Esophagus muscularis mucosa (tissue), 4 donors: ENCODE measurements at regions of chr10 and their contacts with region 1.

Region 1: GRCh38 chr10:102729029-102730026 is 14.4 kb upstream of the WBP1L start:
- DNase-seq: no peak
- H3K4me3 ChIP-seq: no peak overlapping the region
- H3K27ac ChIP-seq: no peak overlapping the region
- H3K4me1 ChIP-seq: peaks cover 9 to 13% (median 12%) of the 10 kb centered on the region in 4 donors
- H3K27me3 ChIP-seq: no peaks in the 10 kb centered on the region
- CTCF ChIP-seq: peak in 2 of 3 experiments; percentile 92 to 96
- EP300 ChIP-seq: no peak
- POLR2A ChIP-seq: no peak

Region 2: GRCh38 chr10:102225646-102226541 is 503.4 kb before region 1 on chr10 and contains the start of gene ELOVL3:
- intact Hi-C with region 1: no loop called
- DNase-seq: peak; percentile 96
- H3K4me3 ChIP-seq: peak within 1 kb of the TSS; percentile 34 to 54 (median 41)
- H3K27ac ChIP-seq: peak within 1 kb of the TSS; percentile 53 to 76 (median 70)
- H3K4me1 ChIP-seq: peaks cover 24 to 32% (median 30%) of the 10 kb centered on the region in 4 donors
- H3K27me3 ChIP-seq: peaks cover 4 to 35% (median 8%) of the 10 kb centered on the region in 4 donors
- CTCF ChIP-seq: peak in 1 of 3 experiments; percentile 8
- EP300 ChIP-seq: no peak
- POLR2A ChIP-seq: no peak
- total RNA-seq, gene ELOVL3: 0.19 TPM in 1 of 4 donors, not detected in the others

Region 3: DNA sequence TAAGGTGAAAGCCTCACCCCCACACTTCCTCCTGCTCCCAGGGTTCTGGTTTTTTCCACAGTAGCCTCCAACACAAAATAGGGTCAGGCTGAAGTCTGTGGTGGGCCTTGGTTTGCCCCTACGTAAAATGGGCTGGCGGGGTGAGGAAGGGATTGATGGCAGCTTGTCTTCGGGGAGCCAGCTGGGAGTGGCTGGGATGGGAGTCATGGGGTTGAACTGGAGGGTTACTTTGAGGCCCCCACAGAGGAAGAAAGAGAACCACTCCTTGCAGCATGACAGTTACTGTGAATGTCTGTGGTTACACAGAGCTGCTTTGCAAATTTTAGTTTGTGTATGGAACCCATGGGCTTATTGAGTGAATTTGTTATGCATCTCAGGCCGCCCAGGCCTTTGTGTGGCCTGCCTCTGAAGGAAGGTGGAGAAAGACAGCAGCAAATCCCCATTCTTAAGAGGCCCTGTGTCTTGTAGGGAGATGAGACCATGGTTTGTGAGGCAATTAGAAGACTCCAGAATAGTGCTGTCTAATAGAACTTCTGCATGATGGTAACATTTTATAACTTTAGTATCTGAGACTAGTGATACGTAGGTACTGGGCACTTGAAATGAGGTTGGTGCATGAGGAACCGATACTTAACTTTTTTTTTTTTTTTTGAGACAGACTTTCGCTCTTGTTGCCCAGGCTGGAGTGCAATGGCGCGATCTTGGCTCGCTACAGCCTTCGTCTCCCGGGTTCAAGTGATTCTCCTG is 77.0 kb before region 1 on chr10:
- intact Hi-C with region 1: no loop called
- DNase-seq: no peak
- H3K4me3 ChIP-seq: no peak overlapping the region
- H3K27ac ChIP-seq: peak overlapping the region; percentile 19 to 100 (median 44)
- H3K4me1 ChIP-seq: peaks cover 66 to 84% (median 78%) of the 10 kb centered on the region in 4 donors
- H3K27me3 ChIP-seq: no peaks in the 10 kb centered on the region
- CTCF ChIP-seq: no peak
- EP300 ChIP-seq: no peak
- POLR2A ChIP-seq: no peak

Region 4: DNA sequence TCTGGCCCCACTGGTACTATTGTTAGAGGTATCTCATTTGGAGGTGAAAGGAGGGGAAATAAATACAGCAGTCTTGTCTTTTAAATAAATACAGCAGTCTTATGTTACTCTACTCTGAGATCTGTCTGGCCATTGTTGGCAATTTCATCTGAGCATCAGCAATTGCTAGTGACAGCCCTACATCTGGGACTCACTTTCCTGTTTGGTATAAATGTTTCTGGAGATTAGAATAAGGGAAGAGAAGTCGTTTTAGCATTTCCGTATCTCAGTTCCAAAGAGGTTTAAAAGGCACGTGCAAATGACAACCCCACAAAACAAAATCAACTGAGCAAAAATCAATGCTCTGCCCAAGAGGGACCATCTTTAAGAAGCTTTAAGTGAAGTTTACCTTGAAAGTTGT is 170.7 kb after region 1 on chr10:
- intact Hi-C with region 1: loop called (anchors 1 kb)
- DNase-seq: peak; percentile 29
- H3K4me3 ChIP-seq: no peak overlapping the region
- H3K27ac ChIP-seq: no peak overlapping the region
- H3K4me1 ChIP-seq: no peaks in the 10 kb centered on the region
- H3K27me3 ChIP-seq: no peaks in the 10 kb centered on the region
- CTCF ChIP-seq: no peak
- EP300 ChIP-seq: no peak
- POLR2A ChIP-seq: no peak